ENCODE measurements at regions of chr14 and their contacts with region 1.

Region 1: GRCh38 chr14:37594238-37594914 is 673 bp downstream of the FOXA1 start:
- DNase-seq: peak; percentile 74
- H3K4me3 ChIP-seq: peak overlapping the region; percentile 54 to 84 (median 57)
- H3K27ac ChIP-seq: peak overlapping the region; percentile 49
- H3K4me1 ChIP-seq: peaks cover 27% of the 10 kb centered on the region
- H3K27me3 ChIP-seq: peaks cover 38% of the 10 kb centered on the region
- CTCF ChIP-seq: peak; percentile 85 to 95

Region 2: GRCh38 chr14:37230551-37231194 is 363.7 kb before region 1 on chr14:
- CTCF ChIA-PET with region 1: no interaction called
- dilution Hi-C with region 1: no loop called
- in situ Hi-C with region 1: loop called in 1 of 2 experiments (anchors 10 kb)
- intact Hi-C with region 1: no loop called
- DNase-seq: peak; percentile 31
- H3K4me3 ChIP-seq: no peak overlapping the region
- H3K27ac ChIP-seq: no peak overlapping the region
- H3K4me1 ChIP-seq: no peaks in the 10 kb centered on the region
- H3K27me3 ChIP-seq: no peaks in the 10 kb centered on the region
- CTCF ChIP-seq: peak; percentile 70 to 75

Region 3: DNA sequence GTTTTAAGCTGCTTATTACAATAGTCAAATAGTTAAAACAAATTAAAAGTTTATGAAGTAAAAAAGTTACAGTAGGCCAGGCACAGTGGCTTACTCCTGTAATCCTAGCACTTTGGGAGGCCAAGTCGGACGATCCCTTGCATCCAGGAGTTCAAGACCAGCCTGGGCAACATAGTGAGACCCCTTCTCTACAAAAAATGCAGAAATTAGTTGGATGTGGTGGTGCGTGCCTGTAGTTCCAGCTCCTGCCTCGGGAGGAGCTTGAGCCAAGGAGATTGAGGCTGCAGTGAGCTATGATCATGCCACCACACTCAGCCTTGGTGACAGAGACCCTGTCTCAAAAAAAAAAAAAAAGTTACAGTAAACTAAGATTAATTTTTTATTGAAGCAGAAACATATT is 254.0 kb before region 1 on chr14:
- CTCF ChIA-PET with region 1: no interaction called
- dilution Hi-C with region 1: no loop called
- in situ Hi-C with region 1: no loop called
- intact Hi-C with region 1: loop called (anchors 10 kb)
- DNase-seq: no peak
- H3K4me3 ChIP-seq: no peak overlapping the region
- H3K27ac ChIP-seq: no peak overlapping the region
- H3K4me1 ChIP-seq: no peaks in the 10 kb centered on the region
- H3K27me3 ChIP-seq: no peaks in the 10 kb centered on the region
- CTCF ChIP-seq: peak; percentile 3 to 25

Region 4: GRCh38 chr14:37658156-37658555 is 63.8 kb after region 1 on chr14:
- CTCF ChIA-PET with region 1: interaction called, 11 read pairs
- dilution Hi-C with region 1: no loop called
- in situ Hi-C with region 1: no loop called
- intact Hi-C with region 1: no loop called
- DNase-seq: no peak
- H3K4me3 ChIP-seq: no peak overlapping the region
- H3K27ac ChIP-seq: no peak overlapping the region
- H3K4me1 ChIP-seq: peaks cover 11% of the 10 kb centered on the region
- H3K27me3 ChIP-seq: no peaks in the 10 kb centered on the region
- CTCF ChIP-seq: no peak

Region 5: GRCh38 chr14:37668646-37669045 is 74.3 kb after region 1 on chr14:
- CTCF ChIA-PET with region 1: no interaction called
- dilution Hi-C with region 1: no loop called
- in situ Hi-C with region 1: no loop called
- intact Hi-C with region 1: no loop called
- DNase-seq: peak; percentile 62
- H3K4me3 ChIP-seq: no peak overlapping the region
- H3K27ac ChIP-seq: no peak overlapping the region
- H3K4me1 ChIP-seq: no peaks in the 10 kb centered on the region
- H3K27me3 ChIP-seq: no peaks in the 10 kb centered on the region
- CTCF ChIP-seq: no peak

Region 6: DNA sequence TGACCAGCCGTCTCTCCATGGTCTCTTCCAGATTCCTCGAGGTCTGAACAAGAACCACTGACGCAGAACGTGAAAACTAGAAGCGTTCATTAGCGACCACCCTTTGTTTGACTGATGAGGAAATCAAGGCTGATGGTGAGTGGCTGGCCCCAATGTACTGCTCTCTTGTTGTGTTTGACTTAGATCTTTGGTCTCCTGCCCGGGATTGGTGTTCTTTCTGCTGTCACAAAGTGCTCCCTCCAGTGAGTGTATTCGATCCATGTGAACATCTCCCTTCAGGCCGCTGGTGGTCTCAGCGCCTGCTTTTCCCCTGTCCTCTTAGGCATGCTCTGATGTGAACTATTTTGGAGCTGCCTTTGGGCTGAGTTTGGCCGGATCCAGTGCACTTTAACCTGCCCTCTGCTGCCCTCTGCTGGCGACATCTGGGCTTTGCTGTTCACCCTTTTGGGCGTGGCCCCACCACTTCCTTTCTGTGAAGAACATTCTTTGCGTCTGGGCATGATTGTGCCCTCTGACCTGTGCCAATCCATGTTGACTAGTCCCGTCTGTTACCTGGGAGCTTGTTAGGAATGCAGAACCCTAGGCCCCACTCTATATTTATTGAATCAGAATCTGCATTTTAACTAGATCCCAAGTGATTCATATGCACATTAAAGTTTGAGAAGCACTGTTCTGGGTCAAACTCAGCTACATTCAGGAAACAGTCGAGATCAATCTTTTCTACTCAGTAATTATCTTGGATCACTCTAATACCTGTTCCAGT is 280.2 kb after region 1 on chr14:
- CTCF ChIA-PET with region 1: no interaction called
- dilution Hi-C with region 1: no loop called
- in situ Hi-C with region 1: no loop called
- intact Hi-C with region 1: loop called (anchors 1 kb)
- DNase-seq: peak; percentile 66
- H3K4me3 ChIP-seq: no peak overlapping the region
- H3K27ac ChIP-seq: peak overlapping the region; percentile 14
- H3K4me1 ChIP-seq: peaks cover 4% of the 10 kb centered on the region
- H3K27me3 ChIP-seq: no peaks in the 10 kb centered on the region
- CTCF ChIP-seq: peak; percentile 86 to 89

Measured in mammary epithelial cell (primary cell).